OCI-LY7 (cell line): ENCODE measurements at regions of chr18 and their contacts with region 1.

Region 1: GRCh38 chr18:59988098-59988706 is 88.4 kb downstream of the PMAIP1 start:
- DNase-seq: peak; percentile 53
- H3K4me3 ChIP-seq: no peak overlapping the region
- H3K27ac ChIP-seq: no peak overlapping the region
- H3K4me1 ChIP-seq: no peaks in the 10 kb centered on the region
- CTCF ChIP-seq: peak; percentile 93

Region 2: GRCh38 chr18:59837586-59837985 is 150.6 kb before region 1 on chr18:
- CTCF ChIA-PET with region 1: no interaction called
- POLR2A ChIA-PET with region 1: no interaction called
- intact Hi-C with region 1: loop called (anchors 2 kb)
- DNase-seq: peak; percentile 72
- H3K4me3 ChIP-seq: no peak overlapping the region
- H3K27ac ChIP-seq: no peak overlapping the region
- H3K4me1 ChIP-seq: peaks cover 5% of the 10 kb centered on the region
- CTCF ChIP-seq: peak; percentile 87

Region 3: GRCh38 chr18:60549338-60549960 is 561.2 kb after region 1 on chr18:
- CTCF ChIA-PET with region 1: no interaction called
- POLR2A ChIA-PET with region 1: no interaction called
- intact Hi-C with region 1: loop called (anchors 2 kb)
- DNase-seq: peak; percentile 70
- H3K4me3 ChIP-seq: no peak overlapping the region
- H3K27ac ChIP-seq: no peak overlapping the region
- H3K4me1 ChIP-seq: no peaks in the 10 kb centered on the region
- CTCF ChIP-seq: peak; percentile 81